ENCODE measurements at regions of chr4 and their contacts with region 1.

Region 1: DNA sequence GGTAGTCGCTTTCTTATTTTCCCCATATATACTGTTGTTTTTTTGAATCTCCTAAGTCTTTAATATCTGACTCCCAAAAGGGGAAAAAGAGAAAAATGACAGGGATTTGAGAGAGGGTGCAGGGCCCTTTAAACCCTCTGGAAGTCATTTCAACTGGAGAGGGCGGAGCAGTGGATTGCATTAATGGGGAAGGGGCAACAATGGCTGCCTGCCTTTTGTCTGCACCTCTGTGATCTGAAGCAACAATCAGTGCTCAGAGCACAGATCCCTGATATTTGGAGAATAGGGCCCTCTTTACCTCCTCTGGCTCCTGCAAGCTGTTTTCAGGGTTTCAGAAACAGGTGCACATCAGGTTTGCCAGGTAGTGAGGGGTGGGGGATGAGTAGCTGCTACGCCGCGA is 1458.3 kb upstream of the TENM3 start:
- DNase-seq: no peak
- H3K4me3 ChIP-seq: no peak overlapping the region
- H3K27ac ChIP-seq: no peak overlapping the region
- H3K4me1 ChIP-seq: no peaks in the 10 kb centered on the region
- CTCF ChIP-seq: no peak

Region 2: GRCh38 chr4:180766944-180767729 is 17.8 kb before region 1 on chr4:
- CTCF ChIA-PET with region 1: interaction called, 3 read pairs
- POLR2A ChIA-PET with region 1: interaction called, 12 read pairs
- intact Hi-C with region 1: no loop called
- DNase-seq: no peak
- H3K4me3 ChIP-seq: no peak overlapping the region
- H3K27ac ChIP-seq: no peak overlapping the region
- H3K4me1 ChIP-seq: peaks cover 4% of the 10 kb centered on the region
- CTCF ChIP-seq: no peak

Region 3: DNA sequence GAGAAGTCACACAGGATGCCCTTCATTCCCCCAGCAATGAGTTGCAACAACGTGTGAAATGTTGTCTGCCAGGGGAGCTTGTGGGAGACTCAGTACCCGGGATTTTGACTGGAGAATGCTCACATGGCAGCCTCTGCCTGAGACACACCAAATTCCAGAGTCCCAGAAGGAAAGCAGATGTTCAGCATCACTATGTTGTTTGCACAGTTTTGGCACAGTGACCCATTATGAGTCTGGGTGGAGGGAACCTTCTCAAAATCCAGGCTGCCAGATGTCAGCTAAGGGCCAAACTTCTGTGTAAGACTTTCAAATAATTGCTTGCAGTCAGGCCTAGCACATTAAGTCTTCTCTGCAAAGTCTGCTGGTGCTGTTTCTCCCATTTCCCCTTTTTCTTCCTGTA is 428.6 kb after region 1 on chr4:
- CTCF ChIA-PET with region 1: no interaction called
- POLR2A ChIA-PET with region 1: no interaction called
- intact Hi-C with region 1: no loop called
- DNase-seq: no peak
- H3K4me3 ChIP-seq: no peak overlapping the region
- H3K27ac ChIP-seq: no peak overlapping the region
- H3K4me1 ChIP-seq: no peaks in the 10 kb centered on the region
- CTCF ChIP-seq: no peak